PC-9 (cell line): ENCODE measurements at regions of chr18 and their contacts with region 1.

Region 1: DNA sequence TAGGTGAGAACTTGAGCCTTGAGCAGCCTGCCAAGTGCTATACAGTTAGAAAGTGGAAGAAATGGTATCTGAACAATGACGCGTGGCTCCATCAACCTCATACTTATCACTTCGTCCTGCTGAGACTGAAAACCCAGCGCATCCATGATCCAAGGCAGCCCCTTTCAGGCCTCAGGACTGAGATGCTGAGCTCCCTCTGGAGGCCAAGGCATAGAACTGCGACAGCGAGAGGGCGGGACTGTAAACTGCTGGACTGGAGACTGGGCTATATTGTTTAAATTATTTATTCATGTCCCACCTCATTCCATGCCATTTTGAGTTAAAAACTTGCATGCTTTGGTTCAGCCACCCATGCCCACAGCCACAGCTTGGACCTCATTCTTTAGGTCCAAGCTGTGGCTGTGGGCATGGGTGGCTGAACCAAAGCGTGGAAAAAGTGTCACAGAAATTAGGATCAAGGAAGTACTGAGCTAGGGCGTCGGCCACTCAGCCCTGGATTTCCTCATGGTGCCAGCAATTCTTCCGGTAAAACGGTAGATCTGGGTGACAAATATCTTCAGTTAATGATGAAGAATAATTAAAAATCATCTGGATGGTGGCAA is 195.5 kb downstream of the L3MBTL4 start:
- DNase-seq: peak in 1 of 2 experiments; percentile 9
- H3K4me3 ChIP-seq: no peak overlapping the region
- H3K27ac ChIP-seq: no peak overlapping the region
- H3K4me1 ChIP-seq: no peaks in the 10 kb centered on the region
- H3K27me3 ChIP-seq: no peaks in the 10 kb centered on the region
- CTCF ChIP-seq: peak; percentile 45

Region 2: GRCh38 chr18:6088432-6088831 is 130.8 kb before region 1 on chr18:
- CTCF ChIA-PET with region 1: interaction called, 12 read pairs
- POLR2A ChIA-PET with region 1: no interaction called
- intact Hi-C with region 1: no loop called
- DNase-seq: no peak
- H3K4me3 ChIP-seq: no peak overlapping the region
- H3K27ac ChIP-seq: no peak overlapping the region
- H3K4me1 ChIP-seq: no peaks in the 10 kb centered on the region
- H3K27me3 ChIP-seq: peaks cover 3% of the 10 kb centered on the region; the same call in 1 of the 2 replicates
- CTCF ChIP-seq: no peak

Region 3: GRCh38 chr18:6120820-6121279 is 98.4 kb before region 1 on chr18:
- CTCF ChIA-PET with region 1: no interaction called
- POLR2A ChIA-PET with region 1: no interaction called
- intact Hi-C with region 1: no loop called
- DNase-seq: no peak
- H3K4me3 ChIP-seq: no peak overlapping the region
- H3K27ac ChIP-seq: no peak overlapping the region
- H3K4me1 ChIP-seq: no peaks in the 10 kb centered on the region
- H3K27me3 ChIP-seq: no peaks in the 10 kb centered on the region; the same call in 1 of the 2 replicates
- CTCF ChIP-seq: no peak

Region 4: DNA sequence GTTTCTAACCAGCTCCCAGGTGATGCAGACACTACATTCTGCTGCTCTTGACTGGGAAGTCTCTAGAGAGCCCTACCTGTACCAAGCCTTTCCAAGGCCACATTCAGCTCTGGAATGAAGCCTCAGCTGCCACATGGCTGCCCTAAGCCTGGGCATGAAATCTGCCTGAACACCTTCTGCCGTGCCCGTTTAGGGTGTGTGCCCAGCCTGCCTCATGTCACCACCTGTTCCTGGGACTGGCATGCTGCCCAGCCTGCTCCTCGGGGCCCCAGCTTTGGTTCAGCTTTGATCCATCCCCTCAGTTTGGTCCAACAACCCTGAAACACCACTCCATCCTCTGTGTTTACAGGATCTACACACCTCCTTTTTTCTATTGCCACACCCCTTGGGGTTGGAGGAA is 15.4 kb before region 1 on chr18:
- CTCF ChIA-PET with region 1: interaction called, 12 read pairs
- POLR2A ChIA-PET with region 1: no interaction called
- intact Hi-C with region 1: no loop called
- DNase-seq: no peak
- H3K4me3 ChIP-seq: no peak overlapping the region
- H3K27ac ChIP-seq: no peak overlapping the region
- H3K4me1 ChIP-seq: no peaks in the 10 kb centered on the region
- H3K27me3 ChIP-seq: no peaks in the 10 kb centered on the region
- CTCF ChIP-seq: no peak

Region 5: GRCh38 chr18:6830916-6831315 is 611.7 kb after region 1 on chr18:
- CTCF ChIA-PET with region 1: no interaction called
- POLR2A ChIA-PET with region 1: no interaction called
- intact Hi-C with region 1: no loop called
- DNase-seq: no peak
- H3K4me3 ChIP-seq: no peak overlapping the region
- H3K27ac ChIP-seq: no peak overlapping the region
- H3K4me1 ChIP-seq: no peaks in the 10 kb centered on the region
- H3K27me3 ChIP-seq: no peaks in the 10 kb centered on the region
- CTCF ChIP-seq: no peak